HepG2 (cell line): ENCODE measurements at regions of chr6 and their contacts with region 1.

Region 1: GRCh38 chr6:35415065-35415991 is 36.8 kb upstream of the FANCE start:
- DNase-seq: peak; percentile 99
- ATAC-seq: peak; percentile 92
- H3K4me3 ChIP-seq: no peak overlapping the region; a peak in 1 of 6 replicates
- H3K27ac ChIP-seq: peak overlapping the region; percentile 52
- H3K4me1 ChIP-seq: peaks cover 33% of the 10 kb centered on the region
- H3K27me3 ChIP-seq: no peaks in the 10 kb centered on the region
- CTCF ChIP-seq: peak; percentile 97
- EP300 ChIP-seq: peak; percentile 36 to 91; a peak in 3 of 4 replicates
- POLR2A ChIP-seq: no peak
- RAD21 ChIP-seq: peak; percentile 97

Region 2: GRCh38 chr6:35342258-35343091 is 72.9 kb before region 1 on chr6 and contains the start of gene PPARD:
- CTCF ChIA-PET with region 1: interaction called, 37 read pairs
- POLR2A ChIA-PET with region 1: interaction called, 18 read pairs
- in situ Hi-C with region 1: no loop called
- intact Hi-C with region 1: loop called (anchors 1 kb)
- DNase-seq: peak; percentile 93
- ATAC-seq: peak; percentile 95
- H3K4me3 ChIP-seq: peak within 1 kb of the TSS; percentile 74 to 89 (median 87)
- H3K27ac ChIP-seq: peak within 1 kb of the TSS; percentile 46
- H3K4me1 ChIP-seq: peaks cover 40% of the 10 kb centered on the region
- H3K27me3 ChIP-seq: no peaks in the 10 kb centered on the region; a peak in 1 of 5 replicates
- CTCF ChIP-seq: peak; percentile 100
- EP300 ChIP-seq: peak in 1 of 2 experiments; percentile 36; a peak in 1 of 4 replicates
- POLR2A ChIP-seq: peak; percentile 59 to 66
- RAD21 ChIP-seq: peak; percentile 100
- total RNA-seq, gene PPARD: 5.8 and 6.1 TPM in 2 replicates

Region 3: GRCh38 chr6:35370124-35370741 is 45.1 kb before region 1 on chr6:
- CTCF ChIA-PET with region 1: no interaction called
- POLR2A ChIA-PET with region 1: interaction called, 17 read pairs
- in situ Hi-C with region 1: no loop called
- intact Hi-C with region 1: loop called (anchors 1 kb)
- DNase-seq: peak; percentile 65
- ATAC-seq: peak; percentile 6; the same call in 1 of the 3 replicates
- H3K4me3 ChIP-seq: no peak overlapping the region
- H3K27ac ChIP-seq: peak overlapping the region; percentile 84
- H3K4me1 ChIP-seq: peaks cover 78% of the 10 kb centered on the region
- H3K27me3 ChIP-seq: no peaks in the 10 kb centered on the region
- CTCF ChIP-seq: no peak
- EP300 ChIP-seq: peak in 1 of 2 experiments; percentile 55; a peak in 1 of 4 replicates
- POLR2A ChIP-seq: no peak
- RAD21 ChIP-seq: no peak

Region 4: GRCh38 chr6:35402136-35402855 is 13.0 kb before region 1 on chr6:
- CTCF ChIA-PET with region 1: interaction called, 5 read pairs
- POLR2A ChIA-PET with region 1: interaction called, 5 read pairs
- in situ Hi-C with region 1: no loop called
- intact Hi-C with region 1: loop called (anchors 1 kb)
- DNase-seq: peak; percentile 93
- ATAC-seq: peak; percentile 95
- H3K4me3 ChIP-seq: peak overlapping the region in 1 of 3 experiments; percentile 49; a peak in 2 of 6 replicates
- H3K27ac ChIP-seq: peak overlapping the region; percentile 63
- H3K4me1 ChIP-seq: peaks cover 53% of the 10 kb centered on the region
- H3K27me3 ChIP-seq: no peaks in the 10 kb centered on the region
- CTCF ChIP-seq: 0 out of 2 replicates have a peak, but pooled peaks have one; percentile 7
- EP300 ChIP-seq: peak in 1 of 2 experiments; percentile 85; a peak in 2 of 4 replicates
- POLR2A ChIP-seq: 0 out of 4 replicates have a peak, but pooled peaks of 1 of the 2 experiments have one; percentile 36
- RAD21 ChIP-seq: no peak

Region 5: GRCh38 chr6:35452186-35453090 is 37.1 kb after region 1 on chr6 and contains the start of gene FANCE:
- CTCF ChIA-PET with region 1: interaction called, 7 read pairs
- POLR2A ChIA-PET with region 1: interaction called, 11 read pairs
- in situ Hi-C with region 1: no loop called
- intact Hi-C with region 1: loop called (anchors 1 kb)
- DNase-seq: peak; percentile 84
- ATAC-seq: peak; percentile 88
- H3K4me3 ChIP-seq: peak within 1 kb of the TSS; percentile 56 to 79 (median 77)
- H3K27ac ChIP-seq: peak within 1 kb of the TSS; percentile 54
- H3K4me1 ChIP-seq: peaks cover 49% of the 10 kb centered on the region
- H3K27me3 ChIP-seq: peaks cover 3 to 22% of the 10 kb centered on the region in 2 experiments; a peak in 2 of 5 replicates
- CTCF ChIP-seq: peak; percentile 31; the same call in 1 of the 2 replicates
- EP300 ChIP-seq: no peak
- POLR2A ChIP-seq: peak; percentile 31 to 68; a peak in 3 of 4 replicates
- RAD21 ChIP-seq: peak; percentile 62
- total RNA-seq, gene FANCE: 9.7 and 11.2 TPM in 2 replicates